ENCODE measurements at regions of chr1 and their contacts with region 1.

Region 1: DNA sequence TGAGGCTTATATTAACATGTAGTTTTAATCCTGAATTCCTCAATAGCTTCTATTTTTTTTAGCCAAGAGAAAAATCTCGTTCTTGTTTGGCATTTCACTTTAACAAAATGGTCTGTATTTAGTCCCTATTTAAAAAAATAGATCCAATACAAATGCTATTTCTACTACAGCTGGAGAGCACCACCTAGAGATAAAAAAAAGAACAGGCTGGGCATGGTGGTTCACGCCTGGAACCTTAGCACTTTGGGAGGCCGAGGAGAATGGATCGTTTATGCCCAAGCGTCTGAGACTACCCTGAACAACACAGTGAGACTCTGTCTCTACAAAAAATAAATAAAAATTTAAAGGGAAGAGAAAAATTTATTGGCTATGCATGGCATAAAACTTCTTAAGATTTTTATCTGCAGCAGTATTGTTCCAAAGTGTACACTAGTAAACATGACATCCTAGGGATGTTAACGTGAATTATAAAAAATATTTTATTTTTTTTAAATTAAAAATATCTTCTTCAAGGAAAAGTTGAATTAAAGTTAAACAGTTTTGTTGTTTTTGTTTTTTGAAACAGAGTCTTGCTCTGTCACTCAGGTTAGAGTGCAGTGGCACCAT is 4.4 kb downstream of the ST7L start:
- DNase-seq: peak; percentile 64
- ATAC-seq: peak; percentile 19; the same call in 1 of the 2 replicates
- H3K4me3 ChIP-seq: no peak overlapping the region
- H3K27ac ChIP-seq: no peak overlapping the region
- H3K4me1 ChIP-seq: no peaks in the 10 kb centered on the region
- H3K27me3 ChIP-seq: no peaks in the 10 kb centered on the region
- CTCF ChIP-seq: peak; percentile 82
- POLR2A ChIP-seq: 0 out of 2 replicates have a peak, but pooled peaks have one; percentile 41
- RAD21 ChIP-seq: peak; percentile 80

Region 2: GRCh38 chr1:112466078-112466660 is 148.4 kb before region 1 on chr1:
- CTCF ChIA-PET with region 1: interaction called, 3 read pairs
- POLR2A ChIA-PET with region 1: no interaction called
- dilution Hi-C with region 1: no loop called
- in situ Hi-C with region 1: no loop called
- intact Hi-C with region 1: loop called (anchors 1 kb)
- DNase-seq: peak; percentile 94
- ATAC-seq: peak; percentile 85
- H3K4me3 ChIP-seq: peak overlapping the region; percentile 26
- H3K27ac ChIP-seq: peak overlapping the region; percentile 41
- H3K4me1 ChIP-seq: peaks cover 13% of the 10 kb centered on the region
- H3K27me3 ChIP-seq: no peaks in the 10 kb centered on the region
- CTCF ChIP-seq: peak; percentile 87
- POLR2A ChIP-seq: 0 out of 2 replicates have a peak, but pooled peaks have one; percentile 12
- RAD21 ChIP-seq: peak; percentile 81

Region 3: DNA sequence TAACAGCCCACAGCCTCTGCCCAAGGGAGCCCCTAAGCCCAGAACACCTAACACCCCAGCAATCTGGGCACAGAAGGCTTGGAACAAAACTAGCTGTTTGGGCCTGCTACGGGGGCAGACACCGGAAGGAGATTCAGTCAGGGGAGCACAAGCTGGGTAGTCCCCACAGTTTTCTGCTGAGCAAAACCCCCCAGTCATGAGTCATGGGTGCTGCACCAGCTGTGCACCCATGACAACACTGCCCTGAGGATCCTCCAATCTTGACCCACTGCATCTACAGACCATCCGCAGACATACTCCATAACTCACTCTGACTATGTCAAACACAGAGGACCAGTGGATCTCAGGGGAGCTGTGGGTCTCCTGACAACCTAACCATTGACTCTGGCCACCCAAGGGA is 563.5 kb after region 1 on chr1:
- CTCF ChIA-PET with region 1: no interaction called
- POLR2A ChIA-PET with region 1: no interaction called
- dilution Hi-C with region 1: no loop called
- in situ Hi-C with region 1: no loop called
- intact Hi-C with region 1: no loop called
- DNase-seq: no peak
- ATAC-seq: no peak
- H3K4me3 ChIP-seq: no peak overlapping the region
- H3K27ac ChIP-seq: no peak overlapping the region
- H3K4me1 ChIP-seq: no peaks in the 10 kb centered on the region
- H3K27me3 ChIP-seq: no peaks in the 10 kb centered on the region; the same call in none of the 2 replicates
- CTCF ChIP-seq: no peak
- POLR2A ChIP-seq: no peak
- RAD21 ChIP-seq: no peak